ENCODE measurements at regions of chr5 and their contacts with region 1.

Region 1: DNA sequence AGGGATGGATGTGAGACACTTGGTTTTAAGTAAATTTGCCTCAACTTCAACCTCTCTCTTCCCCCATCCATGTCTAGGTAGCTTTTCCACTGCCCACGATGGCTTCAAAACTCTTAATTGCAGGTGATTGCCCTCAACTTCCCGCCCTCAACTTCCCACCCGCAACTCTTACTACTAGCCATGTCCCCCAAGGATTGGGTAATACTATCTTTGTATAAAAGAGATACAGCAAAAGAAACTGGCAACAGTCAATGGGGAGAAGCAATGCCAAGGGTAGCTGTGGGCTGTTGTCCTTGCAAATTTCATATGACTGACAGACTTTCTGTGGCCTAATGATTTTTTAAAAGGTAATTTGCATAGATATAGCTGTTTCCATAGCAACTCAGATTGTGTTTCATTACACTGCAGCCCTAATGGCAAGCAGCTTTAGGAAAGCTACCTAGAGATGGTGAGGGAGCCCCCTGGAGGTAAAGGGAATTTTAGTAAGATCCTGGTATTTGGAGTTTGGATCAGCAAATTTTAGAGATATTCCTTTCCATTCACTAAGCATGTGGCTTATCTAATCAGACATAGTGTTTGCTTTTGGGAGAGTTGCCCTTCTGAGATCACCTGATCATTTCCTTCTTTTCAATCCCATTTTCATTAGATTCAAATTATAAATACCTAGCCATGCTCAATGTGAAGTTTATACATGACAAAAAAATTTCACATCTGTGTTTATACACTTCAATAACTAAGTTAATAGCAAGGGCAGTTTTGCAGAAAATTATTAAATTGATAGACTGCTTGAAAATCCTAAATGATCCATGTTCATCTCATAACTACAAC is 421.6 kb upstream of the DAP start:
- DNase-seq: no peak
- ATAC-seq: no peak
- H3K4me3 ChIP-seq: no peak overlapping the region
- H3K27ac ChIP-seq: no peak overlapping the region
- H3K4me1 ChIP-seq: no peaks in the 10 kb centered on the region
- H3K27me3 ChIP-seq: peaks cover 0 to 3% (median 0%) of the 10 kb centered on the region in 3 donors
- CTCF ChIP-seq: peak; percentile 7

Region 2: GRCh38 chr5:10695055-10695649 is 487.5 kb before region 1 on chr5:
- intact Hi-C with region 1: loop called in 1 of 2 experiments (anchors 10 kb)
- DNase-seq: peak; percentile 62 to 76
- ATAC-seq: peak; percentile 81 to 89 (median 85)
- H3K4me3 ChIP-seq: no peak overlapping the region
- H3K27ac ChIP-seq: no peak overlapping the region
- H3K4me1 ChIP-seq: no peaks in the 10 kb centered on the region
- H3K27me3 ChIP-seq: peaks cover 0 to 2% (median 0%) of the 10 kb centered on the region in 3 donors
- CTCF ChIP-seq: peak; percentile 77

Region 3: DNA sequence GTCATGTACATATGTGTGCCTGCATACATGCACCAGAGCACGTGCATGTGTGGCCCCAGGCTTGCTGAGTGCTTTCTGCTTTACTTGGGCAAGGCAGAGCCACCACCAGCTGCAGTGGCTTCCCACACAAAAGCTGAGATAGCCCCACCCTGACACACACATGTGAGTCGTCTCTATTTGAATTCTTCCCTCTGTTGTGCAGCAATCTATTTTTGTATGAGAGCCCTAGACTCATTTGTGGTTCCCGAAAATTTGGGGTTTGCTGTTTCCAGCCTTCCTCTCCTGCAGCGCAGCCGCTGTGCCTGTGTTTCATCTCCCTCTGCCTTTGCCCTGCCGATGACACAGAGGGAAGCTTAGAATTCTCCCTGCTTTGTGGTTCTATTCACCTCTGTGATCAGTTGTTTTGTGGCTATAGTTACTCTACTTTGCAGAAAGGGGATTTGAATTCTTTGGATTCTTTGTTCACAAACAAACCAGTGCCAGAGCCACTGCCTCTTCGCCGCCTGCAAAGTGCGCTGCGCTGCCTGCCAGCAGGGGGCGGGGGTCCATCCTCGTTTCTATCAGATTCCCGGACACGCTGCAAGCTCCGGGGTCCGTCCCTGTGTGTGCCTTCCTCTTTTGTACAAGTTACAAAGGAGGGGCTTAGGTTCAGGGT is 325.8 kb before region 1 on chr5:
- intact Hi-C with region 1: no loop called
- DNase-seq: peak in 1 of 2 donors; percentile 17
- ATAC-seq: no peak
- H3K4me3 ChIP-seq: no peak overlapping the region
- H3K27ac ChIP-seq: no peak overlapping the region
- H3K4me1 ChIP-seq: no peaks in the 10 kb centered on the region
- H3K27me3 ChIP-seq: peaks cover 3 to 5% (median 4%) of the 10 kb centered on the region in 3 donors
- CTCF ChIP-seq: peak; percentile 41

Region 4: GRCh38 chr5:11166923-11167322 is 15.7 kb before region 1 on chr5:
- intact Hi-C with region 1: no loop called
- DNase-seq: no peak
- ATAC-seq: no peak
- H3K4me3 ChIP-seq: no peak overlapping the region
- H3K27ac ChIP-seq: no peak overlapping the region
- H3K4me1 ChIP-seq: no peaks in the 10 kb centered on the region
- H3K27me3 ChIP-seq: no peaks in the 10 kb centered on the region
- CTCF ChIP-seq: no peak

Measured in psoas muscle (tissue), 8 donors.